ENCODE measurements at regions of chr3 and their contacts with region 1.

Region 1: DNA sequence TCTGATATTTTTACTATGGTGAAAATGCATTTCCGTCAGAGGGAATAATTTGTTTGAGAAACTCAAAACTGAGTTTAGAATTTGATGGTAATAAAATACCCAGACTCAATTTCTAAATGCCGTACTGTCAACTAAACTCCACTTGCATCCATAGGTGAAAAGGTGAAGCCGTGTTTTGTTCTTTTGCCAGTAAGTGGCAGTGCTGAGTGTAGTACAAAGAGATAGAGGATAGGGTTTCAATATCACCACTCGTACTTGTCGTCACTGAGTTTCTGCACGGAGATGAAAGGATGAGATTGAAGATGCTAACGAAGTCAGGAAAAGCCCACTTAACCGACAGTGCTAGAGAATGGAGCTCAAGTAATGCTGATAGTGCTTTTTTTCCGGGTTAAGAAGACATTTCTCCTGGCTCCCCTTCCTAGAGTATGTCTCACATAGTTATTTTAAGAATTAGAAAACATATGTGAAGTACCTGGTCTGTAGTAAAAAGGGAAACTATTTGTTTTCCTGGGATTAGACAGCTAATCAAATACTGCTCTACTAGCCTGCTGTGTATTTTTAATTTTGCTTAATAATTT is 345.1 kb downstream of the IL5RA start:
- DNase-seq: no peak
- H3K4me3 ChIP-seq: no peak overlapping the region
- H3K27ac ChIP-seq: no peak overlapping the region
- H3K4me1 ChIP-seq: peaks cover 0 to 5% (median 3%) of the 10 kb centered on the region in 4 experiments; a peak in 4 of 7 replicates
- H3K27me3 ChIP-seq: no peaks in the 10 kb centered on the region
- CTCF ChIP-seq: peak in 2 of 3 experiments; percentile 26 to 60; a peak in 2 of 4 replicates
- EP300 ChIP-seq: no peak
- POLR2A ChIP-seq: no peak
- RAD21 ChIP-seq: peak; percentile 71 to 74

Region 2: GRCh38 chr3:2677501-2677900 is 87.6 kb before region 1 on chr3:
- CTCF ChIA-PET with region 1: no interaction called
- POLR2A ChIA-PET with region 1: no interaction called
- DNase-seq: no peak
- H3K4me3 ChIP-seq: no peak overlapping the region
- H3K27ac ChIP-seq: no peak overlapping the region
- H3K4me1 ChIP-seq: no peaks in the 10 kb centered on the region
- H3K27me3 ChIP-seq: no peaks in the 10 kb centered on the region
- CTCF ChIP-seq: no peak
- EP300 ChIP-seq: no peak
- POLR2A ChIP-seq: no peak
- RAD21 ChIP-seq: no peak

Region 3: DNA sequence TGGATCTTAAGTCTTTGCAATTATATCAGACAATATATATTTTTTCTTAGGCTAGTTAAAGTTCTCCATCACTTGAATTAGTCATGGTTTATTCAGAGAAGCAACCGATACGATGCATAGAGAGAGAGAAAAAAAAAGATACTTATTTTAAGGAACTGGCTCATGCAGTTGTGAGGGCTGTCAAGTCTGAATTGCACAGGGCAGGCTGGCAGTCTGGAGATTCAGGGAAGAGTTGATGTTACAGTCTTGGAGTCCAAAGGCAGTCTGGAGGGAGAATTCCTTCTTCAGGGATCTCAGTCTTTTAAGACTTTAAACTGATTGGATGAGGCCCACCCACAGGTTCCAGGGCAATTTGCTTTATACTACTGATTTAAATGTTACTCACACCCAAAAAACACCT is 67.5 kb before region 1 on chr3:
- CTCF ChIA-PET with region 1: no interaction called
- POLR2A ChIA-PET with region 1: no interaction called
- DNase-seq: no peak
- H3K4me3 ChIP-seq: no peak overlapping the region
- H3K27ac ChIP-seq: no peak overlapping the region
- H3K4me1 ChIP-seq: no peaks in the 10 kb centered on the region
- H3K27me3 ChIP-seq: no peaks in the 10 kb centered on the region
- CTCF ChIP-seq: no peak
- EP300 ChIP-seq: no peak
- POLR2A ChIP-seq: no peak
- RAD21 ChIP-seq: no peak

Region 4: GRCh38 chr3:2713923-2714322 is 51.2 kb before region 1 on chr3:
- CTCF ChIA-PET with region 1: no interaction called
- POLR2A ChIA-PET with region 1: no interaction called
- DNase-seq: no peak
- H3K4me3 ChIP-seq: no peak overlapping the region
- H3K27ac ChIP-seq: no peak overlapping the region
- H3K4me1 ChIP-seq: no peaks in the 10 kb centered on the region
- H3K27me3 ChIP-seq: no peaks in the 10 kb centered on the region
- CTCF ChIP-seq: peak in 1 of 3 experiments; percentile 38; a peak in 2 of 4 replicates
- EP300 ChIP-seq: no peak
- POLR2A ChIP-seq: no peak
- RAD21 ChIP-seq: peak; percentile 19 to 26; a peak in 2 of 4 replicates

Region 5: DNA sequence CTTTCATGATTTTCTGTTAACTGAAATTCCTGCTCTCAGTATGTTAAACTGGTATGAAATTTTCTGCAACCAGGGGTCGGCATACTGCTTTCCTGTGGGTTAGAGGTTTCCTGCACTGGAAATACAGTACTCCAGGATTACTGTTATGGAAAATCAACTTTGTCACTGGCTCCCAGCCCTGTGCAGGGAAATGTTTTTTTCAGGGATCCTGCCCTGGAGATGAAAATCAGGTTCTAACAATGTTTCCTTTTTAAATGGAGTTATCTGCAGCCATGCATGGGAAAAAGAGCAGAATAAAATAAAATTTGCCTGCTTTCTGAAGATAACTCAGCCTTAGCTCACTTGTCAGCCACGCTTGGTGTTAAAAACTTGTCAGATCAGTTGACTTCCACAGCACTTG is 124.6 kb after region 1 on chr3:
- CTCF ChIA-PET with region 1: no interaction called
- POLR2A ChIA-PET with region 1: no interaction called
- DNase-seq: no peak
- H3K4me3 ChIP-seq: no peak overlapping the region
- H3K27ac ChIP-seq: no peak overlapping the region
- H3K4me1 ChIP-seq: no peaks in the 10 kb centered on the region
- H3K27me3 ChIP-seq: no peaks in the 10 kb centered on the region
- CTCF ChIP-seq: no peak
- EP300 ChIP-seq: no peak
- POLR2A ChIP-seq: no peak
- RAD21 ChIP-seq: no peak

Region 6: GRCh38 chr3:2921903-2922302 is 156.8 kb after region 1 on chr3:
- CTCF ChIA-PET with region 1: interaction called, 14 read pairs
- POLR2A ChIA-PET with region 1: no interaction called
- DNase-seq: no peak
- H3K4me3 ChIP-seq: no peak overlapping the region
- H3K27ac ChIP-seq: no peak overlapping the region
- H3K4me1 ChIP-seq: no peaks in the 10 kb centered on the region
- H3K27me3 ChIP-seq: no peaks in the 10 kb centered on the region
- CTCF ChIP-seq: peak in 2 of 3 experiments; percentile 28 to 31; a peak in 2 of 4 replicates
- EP300 ChIP-seq: no peak
- POLR2A ChIP-seq: no peak
- RAD21 ChIP-seq: peak; percentile 70 to 75

Measured in H1 (cell line).